ENCODE measurements at regions of chr1 and their contacts with region 1.

Region 1: GRCh38 chr1:169367486-169368405 is at the starts of genes BLZF1 and NME7:
- DNase-seq: peak; percentile 100
- H3K4me3 Mint-ChIP-seq: peak within 1 kb of the TSS; percentile 73
- H3K27ac Mint-ChIP-seq: peak within 1 kb of the TSS; percentile 26
- H3K4me1 Mint-ChIP-seq: peaks cover 35% of the 10 kb centered on the region
- H3K27me3 Mint-ChIP-seq: no peaks in the 10 kb centered on the region
- total RNA-seq, gene BLZF1: 11.2 and 11.3 TPM in 2 replicates
- total RNA-seq, gene NME7: 10.6 and 13.8 TPM in 2 replicates

Region 2: DNA sequence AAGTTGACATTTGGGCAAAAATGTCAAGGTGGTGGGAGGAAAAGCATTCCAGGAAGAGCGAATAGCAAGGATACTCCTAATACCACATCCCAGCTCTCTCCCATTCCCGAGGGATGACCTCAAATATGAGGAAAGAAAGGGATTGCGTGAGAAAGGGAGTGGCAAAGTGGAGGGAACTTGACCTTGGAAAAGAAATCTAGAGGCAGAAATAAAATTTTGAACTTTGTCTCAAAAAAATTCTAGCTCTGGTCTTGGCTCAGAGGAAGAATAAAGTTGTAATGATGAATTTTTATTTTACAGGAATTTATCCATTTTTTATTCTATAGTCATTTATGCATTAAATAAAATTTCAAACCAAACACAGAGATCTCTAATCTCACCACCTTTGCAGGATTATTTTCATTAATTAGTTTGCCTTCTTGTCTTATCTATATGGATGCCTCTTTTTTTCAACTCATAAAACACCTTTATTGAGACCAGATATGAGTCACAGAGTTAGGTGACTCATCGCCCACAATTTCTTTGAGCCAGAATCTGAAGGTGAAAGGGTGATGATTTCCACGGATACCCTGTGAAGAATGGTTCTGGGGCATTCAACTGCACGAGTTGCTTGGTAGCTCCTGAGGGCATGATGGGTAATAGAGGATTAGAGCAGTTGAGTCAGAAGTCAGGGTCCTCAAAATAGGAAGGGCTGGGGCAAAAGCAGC is 959.1 kb before region 1 on chr1:
- intact Hi-C with region 1: loop called (anchors 10 kb)
- DNase-seq: peak; percentile 90
- H3K4me3 Mint-ChIP-seq: peak overlapping the region; percentile 53
- H3K27ac Mint-ChIP-seq: peak overlapping the region; percentile 86
- H3K4me1 Mint-ChIP-seq: peaks cover 39% of the 10 kb centered on the region
- H3K27me3 Mint-ChIP-seq: no peaks in the 10 kb centered on the region

Region 3: DNA sequence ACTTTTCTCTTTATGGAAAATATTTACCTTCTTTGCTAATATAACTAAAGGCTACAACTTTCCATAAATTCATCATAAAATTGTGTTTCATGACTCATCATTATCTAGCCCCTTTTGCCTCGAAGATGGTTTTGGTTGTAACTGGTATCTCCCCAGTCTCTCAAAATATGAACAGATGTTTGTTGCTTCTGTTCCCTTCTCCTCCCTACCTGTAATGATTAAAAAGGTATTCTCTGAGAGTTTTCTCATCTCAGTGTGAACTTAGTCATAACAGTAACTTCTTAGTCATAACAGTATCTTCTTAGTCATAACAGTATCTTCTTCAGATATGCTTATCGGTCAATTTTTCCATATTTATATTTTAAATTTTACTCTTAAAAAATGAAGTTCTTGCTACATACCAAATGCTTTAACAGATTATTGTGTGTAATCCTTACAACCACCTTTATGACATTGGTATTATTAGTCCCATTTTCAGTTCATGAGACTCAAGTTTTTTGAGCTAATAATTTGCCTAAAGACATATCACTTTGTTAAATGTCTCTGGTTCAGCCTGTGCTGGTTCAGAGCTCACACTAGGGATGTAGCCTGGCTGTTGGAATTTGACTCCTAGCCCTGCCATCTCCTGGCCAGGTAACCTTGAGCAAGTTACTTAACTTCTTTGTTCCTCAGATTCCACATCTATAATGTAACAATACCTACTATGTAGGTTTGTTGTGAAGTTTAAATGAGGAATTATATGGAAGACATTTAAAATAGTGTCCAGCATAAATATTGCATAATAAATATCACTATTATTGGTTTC is 228.7 kb before region 1 on chr1:
- intact Hi-C with region 1: loop called (anchors 2 kb)
- DNase-seq: no peak
- H3K4me3 Mint-ChIP-seq: peak overlapping the region; percentile 8
- H3K27ac Mint-ChIP-seq: peak overlapping the region; percentile 81
- H3K4me1 Mint-ChIP-seq: peaks cover 15% of the 10 kb centered on the region
- H3K27me3 Mint-ChIP-seq: no peaks in the 10 kb centered on the region

Region 4: GRCh38 chr1:169546087-169546995 is 178.6 kb after region 1 on chr1:
- intact Hi-C with region 1: loop called (anchors 10 kb)
- DNase-seq: peak; percentile 90
- H3K4me3 Mint-ChIP-seq: no peak overlapping the region
- H3K27ac Mint-ChIP-seq: no peak overlapping the region
- H3K4me1 Mint-ChIP-seq: peaks cover 19% of the 10 kb centered on the region
- H3K27me3 Mint-ChIP-seq: no peaks in the 10 kb centered on the region

Region 5: DNA sequence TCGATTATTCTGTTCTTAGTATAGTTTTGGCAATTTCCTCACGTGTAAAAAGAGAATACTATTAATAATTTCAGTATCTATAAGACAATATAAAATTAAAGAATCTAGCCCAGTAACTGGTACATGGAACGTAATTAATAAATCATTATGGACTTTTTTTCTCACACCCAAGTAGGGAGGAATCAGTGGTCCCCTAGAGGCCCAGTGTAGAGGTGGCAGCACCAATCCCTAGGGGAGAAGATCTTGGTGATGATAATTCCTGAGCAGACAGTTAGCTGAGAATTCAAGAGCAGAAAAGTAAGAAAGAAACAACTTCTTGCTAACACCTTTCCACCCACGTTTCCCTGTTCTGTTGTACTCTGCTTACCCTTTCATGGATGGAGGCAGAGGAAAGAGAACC is 385.8 kb after region 1 on chr1:
- intact Hi-C with region 1: no loop called
- DNase-seq: no peak
- H3K4me3 Mint-ChIP-seq: no peak overlapping the region
- H3K27ac Mint-ChIP-seq: no peak overlapping the region
- H3K4me1 Mint-ChIP-seq: peaks cover 2% of the 10 kb centered on the region
- H3K27me3 Mint-ChIP-seq: peaks cover 6% of the 10 kb centered on the region

Region 6: DNA sequence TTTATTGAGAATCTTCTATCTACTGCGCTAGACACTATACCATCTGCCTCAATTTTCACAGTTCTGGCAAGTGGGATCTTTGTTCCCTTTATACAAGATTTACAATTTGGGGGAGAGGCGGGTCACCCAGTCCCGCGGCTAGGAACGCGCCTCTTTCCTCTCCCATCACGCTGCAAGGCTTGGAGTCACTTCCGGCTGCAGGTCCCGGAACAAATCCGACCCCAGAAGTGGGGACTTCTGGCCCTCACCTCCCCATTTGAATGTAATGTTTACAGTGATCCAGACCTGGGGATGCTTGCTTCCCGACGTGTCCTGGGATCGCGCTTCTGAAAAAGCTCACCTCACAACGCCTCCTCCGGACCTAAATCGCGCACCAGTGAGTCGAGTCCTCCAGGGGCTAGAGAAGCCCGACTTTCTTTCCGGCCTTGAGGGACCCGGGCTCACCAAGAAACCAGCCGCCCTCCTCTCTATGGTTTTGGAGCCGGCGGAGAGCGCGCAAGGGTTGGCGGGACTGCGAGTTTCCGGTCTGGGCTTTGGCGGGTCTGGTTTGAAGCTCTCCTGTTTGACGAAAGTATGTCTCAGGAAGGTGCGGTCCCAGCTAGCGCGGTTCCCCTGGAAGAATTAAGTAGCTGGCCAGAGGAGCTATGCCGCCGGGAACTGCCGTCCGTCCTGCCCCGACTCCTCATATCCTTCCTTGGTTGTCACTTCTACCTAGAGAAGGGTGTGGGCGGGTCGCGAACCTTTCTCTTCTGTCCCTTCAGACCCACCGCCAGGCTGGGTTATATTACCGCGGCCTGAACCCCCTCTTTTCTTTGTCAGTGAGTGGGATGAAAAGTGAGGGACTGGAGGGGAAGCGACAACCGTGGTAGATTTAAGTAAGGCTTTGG is 427.0 kb after region 1 on chr1 and contains the start of gene METTL18:
- intact Hi-C with region 1: loop called (anchors 2 kb)
- DNase-seq: peak; percentile 98
- H3K4me3 Mint-ChIP-seq: peak within 1 kb of the TSS; percentile 99
- H3K27ac Mint-ChIP-seq: peak within 1 kb of the TSS; percentile 97
- H3K4me1 Mint-ChIP-seq: peaks cover 45% of the 10 kb centered on the region
- H3K27me3 Mint-ChIP-seq: no peaks in the 10 kb centered on the region
- total RNA-seq, gene METTL18: 9.3 and 10.3 TPM in 2 replicates